Activated CD4-positive, alpha-beta memory T cell treated with anti-CD3 and anti-CD28 coated beads for 36 hours (primary cell): ENCODE measurements at regions of chr3 and their contacts with region 1.

Region 1: DNA sequence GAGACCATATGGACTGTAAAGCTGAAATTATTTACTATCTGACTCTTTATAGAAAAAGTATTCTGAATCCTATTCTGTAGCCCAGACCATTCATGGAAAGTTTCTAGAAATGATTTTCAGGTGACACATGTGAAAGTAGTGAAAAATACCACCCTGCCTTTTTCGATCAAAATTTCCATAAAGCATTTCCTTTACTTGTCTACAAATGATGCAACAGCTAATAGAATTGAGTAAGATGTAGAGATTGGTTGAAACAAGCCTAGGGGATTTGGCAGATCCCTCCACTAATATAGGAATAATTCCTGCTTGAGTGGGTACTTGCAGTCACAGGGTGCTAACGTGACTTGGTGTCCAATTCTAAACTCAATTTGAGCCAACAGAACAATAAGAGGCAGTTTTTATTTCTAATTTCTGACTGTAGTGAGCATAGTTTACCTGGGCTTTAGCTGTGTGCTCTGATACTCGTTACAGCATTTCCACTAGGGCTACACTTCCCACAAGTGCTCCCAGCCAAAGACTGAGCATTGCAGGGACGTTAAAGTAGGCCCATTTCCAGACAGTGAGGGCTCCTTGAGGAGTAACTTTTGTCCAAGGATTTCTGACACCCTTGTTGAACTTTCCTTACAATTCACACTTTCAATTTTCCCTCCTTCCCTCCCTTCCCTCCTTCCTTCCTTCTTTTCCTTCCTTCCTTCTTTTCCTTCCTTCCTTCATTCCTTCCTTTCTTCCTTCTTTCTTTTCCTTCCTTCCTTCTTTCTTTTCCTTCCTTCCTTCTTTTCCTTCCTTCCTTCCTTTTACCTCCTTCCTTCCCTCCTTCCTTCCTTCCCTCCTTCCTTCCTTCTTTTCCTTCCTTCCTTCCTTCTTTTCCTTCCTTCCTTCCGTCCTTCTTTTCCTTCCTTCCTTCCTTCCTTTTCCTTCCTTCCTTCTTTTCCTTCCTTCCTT is 53.9 kb upstream of the TP63 start:
- DNase-seq: no peak
- H3K4me3 Mint-ChIP-seq: no peak overlapping the region
- H3K27ac Mint-ChIP-seq: no peak overlapping the region
- H3K4me1 Mint-ChIP-seq: peaks cover 16% of the 10 kb centered on the region
- H3K27me3 Mint-ChIP-seq: no peaks in the 10 kb centered on the region

Region 2: DNA sequence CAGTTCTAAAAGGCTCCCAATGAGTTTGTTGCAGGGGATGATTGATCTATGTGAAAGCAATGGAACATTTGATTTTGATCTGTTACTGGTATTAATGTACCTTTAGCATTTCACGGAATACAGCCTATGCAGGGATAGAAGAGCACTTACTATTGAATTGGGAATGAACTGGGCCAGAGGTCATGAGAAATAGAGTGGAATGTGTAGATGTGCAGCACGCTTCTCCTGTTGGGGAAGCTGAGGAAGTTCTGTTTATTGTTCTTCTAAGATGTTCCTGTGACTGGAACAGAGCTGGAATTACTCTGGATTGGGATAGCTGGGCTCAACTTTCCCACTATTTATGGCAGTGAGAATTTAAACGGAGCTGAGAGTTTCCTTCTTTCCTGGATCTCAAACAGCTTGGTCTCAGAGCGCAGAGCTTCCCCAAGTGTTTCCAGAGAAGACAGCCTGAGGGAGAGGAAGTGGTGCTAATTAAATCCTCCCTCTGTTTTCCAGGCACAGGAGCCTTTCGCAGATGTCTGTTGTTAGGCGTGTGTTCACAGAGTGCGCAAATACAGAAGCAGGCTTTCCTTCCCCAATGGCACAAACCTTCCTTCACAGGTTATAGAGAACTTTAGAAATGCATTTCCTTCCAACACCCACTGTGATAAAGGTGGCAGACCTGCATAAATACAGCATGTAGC is 373.0 kb before region 1 on chr3:
- CTCF ChIA-PET with region 1: no interaction called
- POLR2A ChIA-PET with region 1: no interaction called
- intact Hi-C with region 1: no loop called
- DNase-seq: no peak
- H3K4me3 Mint-ChIP-seq: no peak overlapping the region
- H3K27ac Mint-ChIP-seq: no peak overlapping the region
- H3K4me1 Mint-ChIP-seq: no peaks in the 10 kb centered on the region
- H3K27me3 Mint-ChIP-seq: peaks cover 2% of the 10 kb centered on the region

Region 3: DNA sequence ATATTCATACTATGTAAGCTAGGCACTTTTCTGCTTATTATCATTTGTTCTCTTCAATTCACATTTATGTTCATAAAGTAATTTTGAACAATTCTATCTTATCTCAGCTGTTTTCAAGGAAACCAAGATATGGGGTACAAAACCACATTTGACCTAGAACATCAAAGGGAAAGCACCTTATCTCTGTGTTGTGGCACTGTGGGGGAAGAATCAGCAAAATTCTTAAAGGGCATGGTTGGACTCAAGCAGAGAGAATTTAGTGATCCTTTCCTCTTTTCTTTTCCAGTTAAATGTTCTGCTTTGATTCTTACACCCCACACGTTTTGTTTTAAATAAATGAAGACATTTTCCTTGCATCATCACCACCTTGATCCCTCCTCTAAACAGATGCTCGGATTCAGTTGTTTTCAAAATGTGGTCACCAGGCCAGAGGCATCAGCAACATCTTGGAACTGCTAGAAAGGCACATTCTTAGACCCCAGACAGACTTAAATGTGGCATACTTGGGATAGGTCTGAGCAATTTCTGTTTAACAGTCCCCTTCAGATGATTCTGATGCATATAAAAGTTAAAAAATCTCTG is 74.5 kb before region 1 on chr3:
- CTCF ChIA-PET with region 1: no interaction called
- POLR2A ChIA-PET with region 1: no interaction called
- intact Hi-C with region 1: no loop called
- DNase-seq: no peak
- H3K4me3 Mint-ChIP-seq: no peak overlapping the region
- H3K27ac Mint-ChIP-seq: no peak overlapping the region
- H3K4me1 Mint-ChIP-seq: peaks cover 12% of the 10 kb centered on the region
- H3K27me3 Mint-ChIP-seq: peaks cover 5% of the 10 kb centered on the region

Region 4: DNA sequence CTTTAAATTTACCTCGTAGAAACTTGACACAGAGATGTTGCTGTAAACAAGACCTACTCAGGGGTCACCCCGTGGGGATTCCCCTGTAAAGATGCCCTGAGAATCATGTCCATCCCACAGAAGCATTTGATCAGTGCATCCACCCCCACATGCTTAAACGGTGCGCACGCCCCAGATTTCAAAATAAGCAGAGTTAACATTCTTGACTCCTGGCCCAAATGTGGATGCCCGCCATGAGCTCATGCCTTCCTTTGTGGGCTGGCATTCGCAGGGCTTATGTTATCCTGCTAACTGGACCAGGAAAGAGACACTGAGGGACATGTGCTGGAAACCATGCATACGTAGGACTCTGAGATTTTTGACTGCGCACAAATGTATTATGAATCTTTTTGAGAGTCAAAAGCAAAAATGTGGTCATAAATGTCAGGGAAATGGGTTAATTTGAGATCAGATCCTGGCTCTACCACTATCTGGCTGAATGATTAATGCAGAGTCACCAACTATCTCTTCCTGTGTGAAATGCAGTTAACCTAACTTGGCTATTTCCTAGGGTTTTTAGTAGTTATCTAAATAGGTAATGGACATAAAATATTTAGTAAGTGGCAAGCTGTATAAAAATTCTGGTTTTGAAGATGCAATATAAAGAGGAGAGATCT is 44.8 kb after region 1 on chr3:
- CTCF ChIA-PET with region 1: no interaction called
- POLR2A ChIA-PET with region 1: no interaction called
- intact Hi-C with region 1: loop called (anchors 5 kb)
- DNase-seq: peak; percentile 26
- H3K4me3 Mint-ChIP-seq: no peak overlapping the region
- H3K27ac Mint-ChIP-seq: no peak overlapping the region
- H3K4me1 Mint-ChIP-seq: peaks cover 12% of the 10 kb centered on the region
- H3K27me3 Mint-ChIP-seq: no peaks in the 10 kb centered on the region

Region 5: GRCh38 chr3:189710620-189711402 is 133.5 kb after region 1 on chr3:
- CTCF ChIA-PET with region 1: no interaction called
- POLR2A ChIA-PET with region 1: no interaction called
- intact Hi-C with region 1: no loop called
- DNase-seq: no peak
- H3K4me3 Mint-ChIP-seq: no peak overlapping the region
- H3K27ac Mint-ChIP-seq: no peak overlapping the region
- H3K4me1 Mint-ChIP-seq: peaks cover 12% of the 10 kb centered on the region
- H3K27me3 Mint-ChIP-seq: no peaks in the 10 kb centered on the region